Common myeloid progenitor, CD34-positive (primary cell): ENCODE measurements at regions of chr11 and their contacts with region 1.

Region 1: DNA sequence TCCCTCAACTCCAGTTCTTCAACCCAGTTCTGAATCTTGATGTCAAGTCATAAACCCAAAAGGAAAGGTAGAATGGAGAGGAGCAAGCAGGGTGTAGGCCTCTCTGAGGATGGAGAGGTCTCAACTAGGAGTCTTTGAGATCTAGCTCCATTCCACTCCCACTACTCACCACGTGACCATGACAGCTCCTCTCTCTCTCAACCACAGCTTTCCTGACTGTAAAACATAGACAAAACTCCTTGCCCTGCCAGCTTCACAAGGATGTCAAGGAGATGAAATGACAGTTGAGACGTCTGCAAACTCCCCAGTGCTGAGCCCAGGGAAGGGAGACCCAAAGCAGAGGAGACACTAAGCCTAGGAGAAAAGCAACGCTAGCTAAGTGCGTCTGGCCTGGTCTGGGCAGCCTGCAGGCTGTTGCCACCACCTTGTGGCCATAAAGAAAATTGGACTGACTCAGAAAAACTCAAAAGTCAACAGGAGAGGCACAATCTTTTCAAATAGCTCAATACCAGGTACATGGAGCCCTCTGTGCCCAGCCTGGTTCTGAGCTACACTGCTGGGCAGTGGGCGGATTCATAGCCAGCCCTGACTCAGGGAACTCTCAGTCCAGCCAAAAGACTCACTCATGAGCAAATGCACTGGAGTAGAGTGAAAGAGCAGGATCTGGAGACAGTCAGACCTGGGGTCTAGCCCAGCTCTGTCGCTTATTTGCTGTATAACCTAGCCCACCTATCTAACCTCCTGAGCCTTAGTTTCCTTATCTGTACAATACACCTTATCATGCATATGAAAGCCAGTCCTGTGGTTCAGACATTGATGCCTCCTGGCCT is 3.4 kb downstream of the CLPB start:
- DNase-seq: peak; percentile 53 to 79 (median 78)
- H3K4me3 ChIP-seq: peak overlapping the region in 2 of 7 experiments; percentile 17 to 21
- H3K27ac ChIP-seq: peak overlapping the region in 1 of 2 experiments; percentile 15
- H3K4me1 ChIP-seq: peaks cover 1 to 44% (median 31%) of the 10 kb centered on the region in 4 experiments
- H3K27me3 ChIP-seq: no peaks in the 10 kb centered on the region

Region 2: GRCh38 chr11:72012897-72013721 is 417.8 kb before region 1 on chr11:
- CTCF ChIA-PET with region 1: no interaction called
- POLR2A ChIA-PET with region 1: no interaction called
- DNase-seq: no peak
- H3K4me3 ChIP-seq: no peak overlapping the region
- H3K27ac ChIP-seq: peak overlapping the region in 1 of 2 experiments; percentile 14
- H3K4me1 ChIP-seq: no peaks in the 10 kb centered on the region
- H3K27me3 ChIP-seq: no peaks in the 10 kb centered on the region

Region 3: GRCh38 chr11:72024069-72024754 is 406.7 kb before region 1 on chr11:
- CTCF ChIA-PET with region 1: interaction called, 19 read pairs
- POLR2A ChIA-PET with region 1: no interaction called
- DNase-seq: no peak
- H3K4me3 ChIP-seq: no peak overlapping the region
- H3K27ac ChIP-seq: no peak overlapping the region
- H3K4me1 ChIP-seq: no peaks in the 10 kb centered on the region
- H3K27me3 ChIP-seq: no peaks in the 10 kb centered on the region

Region 4: DNA sequence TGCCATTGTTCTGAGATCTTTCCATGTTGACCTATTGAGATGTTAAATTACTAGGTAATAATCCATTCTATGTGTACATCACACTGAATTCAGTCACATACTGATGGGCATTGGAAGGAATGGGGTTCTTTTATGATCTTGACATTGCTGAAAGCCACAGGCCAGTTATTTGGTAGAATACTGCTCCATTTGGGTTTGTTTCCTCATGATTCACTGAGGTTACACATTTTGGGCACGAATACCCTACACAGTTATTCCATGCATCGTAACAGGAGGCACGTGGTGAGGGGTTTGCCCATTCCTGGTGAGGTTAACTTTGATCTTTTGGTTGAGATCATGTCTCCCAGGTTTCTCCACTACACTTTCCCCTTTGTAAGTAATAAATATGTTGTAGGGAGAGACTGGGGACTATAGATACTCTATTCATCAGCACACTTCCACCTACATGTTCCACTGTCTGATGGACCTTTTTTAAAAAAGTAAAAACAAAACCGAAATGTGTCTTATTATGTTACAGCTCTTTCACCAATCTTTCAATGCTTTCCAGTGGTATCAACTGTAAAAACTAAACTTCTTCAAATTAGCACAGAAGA is 251.1 kb before region 1 on chr11:
- CTCF ChIA-PET with region 1: interaction called, 11 read pairs
- POLR2A ChIA-PET with region 1: no interaction called
- DNase-seq: no peak
- H3K4me3 ChIP-seq: no peak overlapping the region
- H3K27ac ChIP-seq: no peak overlapping the region
- H3K4me1 ChIP-seq: peaks cover 0 to 6% (median 1%) of the 10 kb centered on the region in 4 experiments
- H3K27me3 ChIP-seq: no peaks in the 10 kb centered on the region

Region 5: DNA sequence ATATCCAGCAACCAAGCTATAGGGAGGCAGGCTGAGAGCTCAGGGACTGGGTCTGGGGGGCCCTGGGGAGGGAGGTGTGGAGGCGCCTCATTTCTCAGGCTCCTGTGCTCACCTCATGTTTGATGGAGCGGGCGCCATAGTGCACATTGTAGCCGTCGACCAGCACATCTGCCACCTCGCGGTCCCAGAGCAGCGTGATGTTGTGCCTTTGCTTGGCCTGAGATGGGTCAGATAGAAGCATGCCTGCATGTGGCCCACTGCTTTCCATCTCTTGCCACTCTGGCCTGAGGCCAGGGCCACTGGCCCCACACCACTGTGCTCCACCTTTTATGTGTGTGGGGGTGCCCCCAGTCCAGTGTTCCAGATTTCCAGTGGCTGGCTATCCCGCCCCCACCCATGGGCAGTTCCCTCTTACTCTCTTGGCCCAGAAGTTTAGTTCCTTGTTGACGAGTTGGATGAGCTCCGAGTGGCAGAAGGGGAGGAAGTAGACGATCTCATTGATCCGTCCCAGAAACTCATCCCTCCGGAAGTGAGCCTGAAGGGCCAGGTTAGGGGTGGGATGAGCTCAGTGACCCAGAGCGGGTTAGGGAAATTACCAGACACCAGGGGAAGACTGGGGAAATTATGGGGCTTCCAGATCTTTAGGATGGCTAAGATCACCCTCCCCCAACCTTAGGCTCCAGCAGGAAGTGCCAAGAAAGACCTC is 136.9 kb before region 1 on chr11:
- CTCF ChIA-PET with region 1: interaction called, 20 read pairs
- POLR2A ChIA-PET with region 1: no interaction called
- DNase-seq: no peak
- H3K4me3 ChIP-seq: no peak overlapping the region
- H3K27ac ChIP-seq: no peak overlapping the region
- H3K4me1 ChIP-seq: no peaks in the 10 kb centered on the region
- H3K27me3 ChIP-seq: no peaks in the 10 kb centered on the region

Region 6: GRCh38 chr11:72333661-72334060 is 97.3 kb before region 1 on chr11:
- CTCF ChIA-PET with region 1: interaction called, 44 read pairs
- POLR2A ChIA-PET with region 1: interaction called, 3 read pairs
- DNase-seq: peak; percentile 71 to 81 (median 80)
- H3K4me3 ChIP-seq: peak overlapping the region in 1 of 7 experiments; percentile 14
- H3K27ac ChIP-seq: no peak overlapping the region
- H3K4me1 ChIP-seq: peaks cover 0 to 40% (median 19%) of the 10 kb centered on the region in 4 experiments
- H3K27me3 ChIP-seq: no peaks in the 10 kb centered on the region

Region 7: DNA sequence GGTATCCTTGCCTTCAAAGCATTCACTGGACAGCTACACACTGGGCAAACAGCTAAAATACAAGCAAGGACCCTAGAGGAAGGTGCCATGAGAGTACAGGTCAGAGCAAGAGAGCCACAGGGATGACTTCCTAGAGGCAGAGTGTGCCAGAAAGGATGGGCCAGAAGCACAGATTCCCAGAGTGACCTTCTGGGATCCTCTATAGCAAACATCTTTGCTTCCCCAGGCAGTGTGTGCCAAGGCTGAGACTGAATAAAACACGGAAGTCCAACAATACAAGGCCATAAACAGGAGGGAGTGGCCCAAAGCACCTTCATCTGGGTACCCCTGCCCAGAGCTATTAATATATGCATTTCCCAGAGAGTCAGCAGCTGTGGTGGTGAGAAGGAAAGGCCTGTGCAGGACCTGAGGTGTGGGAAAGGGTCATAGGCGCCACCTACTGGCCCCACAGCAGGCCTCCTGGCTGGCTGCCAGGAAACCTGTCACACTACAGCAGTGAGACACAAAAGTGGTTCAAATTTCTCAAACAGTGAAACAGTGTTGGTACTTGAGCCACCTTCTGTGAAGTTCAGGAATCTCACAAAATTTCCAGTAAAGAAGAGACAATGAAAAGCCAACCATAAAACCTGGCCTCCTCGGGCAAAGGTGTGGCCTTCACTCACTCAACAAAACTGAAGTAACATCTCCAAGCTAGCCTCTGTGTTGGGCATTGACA is 16.9 kb before region 1 on chr11:
- CTCF ChIA-PET with region 1: interaction called, 72 read pairs
- POLR2A ChIA-PET with region 1: interaction called, 4 read pairs
- DNase-seq: peak; percentile 83 to 90 (median 86)
- H3K4me3 ChIP-seq: no peak overlapping the region
- H3K27ac ChIP-seq: no peak overlapping the region
- H3K4me1 ChIP-seq: peaks cover 10 to 37% (median 24%) of the 10 kb centered on the region in 4 experiments
- H3K27me3 ChIP-seq: no peaks in the 10 kb centered on the region